Activated CD4-positive, alpha-beta T cell treated with anti-CD3 and anti-CD28 coated beads, Interleukin-2, amount 10 ng/mL, durations not matched to agents 7 days and 5 days (primary cell): ENCODE measurements at regions of chr13 and their contacts with region 1.

Region 1: GRCh38 chr13:30615481-30615865 is 2.2 kb upstream of the USPL1 start:
- DNase-seq: no peak
- H3K4me3 Mint-ChIP-seq: no peak overlapping the region
- H3K27ac Mint-ChIP-seq: no peak overlapping the region
- H3K4me1 Mint-ChIP-seq: peaks cover 17% of the 10 kb centered on the region
- H3K27me3 Mint-ChIP-seq: no peaks in the 10 kb centered on the region

Region 2: GRCh38 chr13:30551189-30551588 is 64.3 kb before region 1 on chr13:
- CTCF ChIA-PET with region 1: no interaction called
- POLR2A ChIA-PET with region 1: no interaction called
- DNase-seq: peak; percentile 47
- H3K4me3 Mint-ChIP-seq: no peak overlapping the region
- H3K27ac Mint-ChIP-seq: no peak overlapping the region
- H3K4me1 Mint-ChIP-seq: no peaks in the 10 kb centered on the region
- H3K27me3 Mint-ChIP-seq: no peaks in the 10 kb centered on the region

Region 3: GRCh38 chr13:30593001-30593400 is 22.5 kb before region 1 on chr13:
- CTCF ChIA-PET with region 1: no interaction called
- POLR2A ChIA-PET with region 1: no interaction called
- DNase-seq: no peak
- H3K4me3 Mint-ChIP-seq: no peak overlapping the region
- H3K27ac Mint-ChIP-seq: no peak overlapping the region
- H3K4me1 Mint-ChIP-seq: no peaks in the 10 kb centered on the region
- H3K27me3 Mint-ChIP-seq: peaks cover 13% of the 10 kb centered on the region

Region 4: DNA sequence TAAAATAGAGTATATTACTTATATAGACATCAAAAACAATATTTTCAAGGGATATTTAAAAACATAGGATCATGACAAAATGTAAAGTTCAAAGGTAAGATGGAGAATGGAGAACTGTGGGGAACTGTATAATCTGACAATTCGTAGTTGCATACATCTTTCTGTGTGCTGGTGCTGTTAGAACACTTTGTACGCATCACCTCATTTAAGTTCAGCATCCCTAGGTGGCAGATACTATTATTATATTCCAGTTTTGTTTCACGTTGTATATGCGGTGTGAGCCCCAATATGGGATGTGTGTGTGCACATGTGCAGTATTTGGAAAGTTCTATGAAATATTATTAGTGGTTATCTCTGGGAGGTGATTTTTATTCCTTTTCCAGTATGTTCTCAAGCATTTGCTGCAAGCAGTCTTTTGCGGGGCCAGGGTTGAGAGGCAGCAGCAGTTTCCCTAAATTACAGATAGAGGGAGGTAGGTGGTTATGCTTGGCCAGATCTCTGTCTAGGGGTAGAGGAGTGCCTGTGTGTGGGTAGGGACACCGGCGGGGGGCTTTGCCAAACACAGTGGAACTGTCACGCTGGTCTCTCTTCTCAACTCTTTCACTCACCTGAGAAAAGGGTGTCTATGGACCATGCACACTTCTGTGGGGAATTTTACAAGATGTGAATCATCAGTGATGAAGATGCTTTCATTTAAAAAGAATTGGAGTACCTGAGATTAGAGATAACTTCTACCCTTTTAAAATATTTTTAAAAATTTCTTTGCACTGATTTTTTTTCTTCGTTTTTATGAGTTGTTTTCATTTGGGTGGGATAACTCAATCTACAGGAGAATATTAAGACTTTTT is 64.2 kb after region 1 on chr13:
- CTCF ChIA-PET with region 1: no interaction called
- POLR2A ChIA-PET with region 1: no interaction called
- DNase-seq: peak; percentile 46
- H3K4me3 Mint-ChIP-seq: no peak overlapping the region
- H3K27ac Mint-ChIP-seq: no peak overlapping the region
- H3K4me1 Mint-ChIP-seq: peaks cover 7% of the 10 kb centered on the region
- H3K27me3 Mint-ChIP-seq: peaks cover 24% of the 10 kb centered on the region

Region 5: DNA sequence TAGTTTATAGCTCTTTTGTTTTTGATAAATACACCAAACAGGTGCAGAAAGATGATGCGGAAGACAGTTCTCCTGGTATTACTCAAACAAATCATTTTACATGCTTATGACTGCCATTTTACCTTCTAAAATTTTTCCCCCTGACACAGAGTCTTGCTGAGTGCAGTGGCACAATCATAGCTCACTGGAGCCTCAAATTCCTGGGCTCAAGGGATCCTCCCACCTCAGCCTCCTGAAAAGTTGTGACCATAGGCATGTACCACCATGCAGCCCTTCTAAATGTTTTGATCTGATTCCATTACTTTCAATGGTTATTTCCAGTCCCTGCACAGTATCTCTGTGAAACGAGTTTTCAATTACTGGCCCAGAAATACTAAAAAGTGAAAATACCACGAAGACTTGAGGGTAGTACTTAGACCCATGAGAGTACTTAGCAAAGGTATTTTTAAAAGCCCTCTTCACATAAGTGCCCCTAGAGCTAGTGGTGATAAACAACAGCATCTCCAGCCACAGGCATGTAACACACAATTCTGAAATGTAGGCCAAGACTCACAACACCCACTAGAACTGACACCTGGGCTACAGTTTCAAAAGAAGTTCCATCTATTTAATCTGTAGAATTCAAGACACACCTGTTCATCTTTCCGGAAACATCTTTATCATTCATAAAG is 535.0 kb after region 1 on chr13:
- CTCF ChIA-PET with region 1: no interaction called
- POLR2A ChIA-PET with region 1: interaction called, 11 read pairs
- DNase-seq: no peak
- H3K4me3 Mint-ChIP-seq: no peak overlapping the region
- H3K27ac Mint-ChIP-seq: no peak overlapping the region
- H3K4me1 Mint-ChIP-seq: peaks cover 40% of the 10 kb centered on the region
- H3K27me3 Mint-ChIP-seq: no peaks in the 10 kb centered on the region